ENCODE measurements at regions of chr17 and their contacts with region 1.

Region 1: DNA sequence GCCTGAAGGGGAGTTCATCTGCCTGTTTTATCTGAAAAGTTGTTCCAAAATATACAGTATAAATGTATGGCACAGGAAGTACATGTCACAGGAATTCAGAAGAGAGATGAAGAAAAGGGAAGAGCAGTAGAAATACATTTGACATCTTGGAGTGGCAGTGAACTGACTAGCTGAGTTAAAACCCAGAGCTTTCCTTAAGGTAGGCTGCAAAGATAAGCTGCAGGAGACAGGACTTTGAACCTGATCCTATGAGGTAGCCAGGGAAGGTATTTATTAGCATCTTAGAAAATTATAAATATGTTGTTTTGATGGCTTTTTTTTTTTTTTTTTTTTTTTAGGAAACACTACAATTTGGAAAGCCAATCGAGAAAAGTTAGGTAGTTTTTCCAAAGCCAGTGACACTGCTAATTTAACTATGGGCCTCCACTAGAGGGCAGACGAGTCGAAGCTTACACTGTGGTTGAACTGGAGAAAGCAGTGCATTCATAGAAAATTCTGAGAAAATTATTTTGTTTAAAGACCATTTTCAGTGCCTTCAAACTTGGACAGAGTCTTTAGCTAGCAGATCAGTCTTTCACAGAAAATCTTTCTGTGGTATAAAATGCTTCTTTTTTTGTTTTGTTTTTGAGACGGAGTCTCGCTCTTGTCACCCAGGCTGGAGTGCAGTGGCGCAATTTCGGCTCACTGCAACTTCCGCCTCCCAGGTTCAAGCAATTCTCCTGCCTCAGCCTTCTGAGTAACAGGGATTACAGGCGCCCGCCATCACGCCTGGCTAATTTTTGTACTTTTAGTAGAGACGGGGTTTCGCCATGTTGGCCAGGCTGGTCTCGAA is 122.3 kb downstream of the SSH2 start:
- DNase-seq: peak; percentile 31
- ATAC-seq: peak; percentile 83
- H3K4me3 ChIP-seq: no peak overlapping the region
- H3K27ac ChIP-seq: no peak overlapping the region
- H3K4me1 ChIP-seq: peaks cover 19% of the 10 kb centered on the region
- H3K27me3 ChIP-seq: no peaks in the 10 kb centered on the region
- CTCF ChIP-seq: peak; percentile 65 to 85 (median 69)
- EP300 ChIP-seq: no peak
- POLR2A ChIP-seq: no peak
- RAD21 ChIP-seq: peak; percentile 90

Region 2: DNA sequence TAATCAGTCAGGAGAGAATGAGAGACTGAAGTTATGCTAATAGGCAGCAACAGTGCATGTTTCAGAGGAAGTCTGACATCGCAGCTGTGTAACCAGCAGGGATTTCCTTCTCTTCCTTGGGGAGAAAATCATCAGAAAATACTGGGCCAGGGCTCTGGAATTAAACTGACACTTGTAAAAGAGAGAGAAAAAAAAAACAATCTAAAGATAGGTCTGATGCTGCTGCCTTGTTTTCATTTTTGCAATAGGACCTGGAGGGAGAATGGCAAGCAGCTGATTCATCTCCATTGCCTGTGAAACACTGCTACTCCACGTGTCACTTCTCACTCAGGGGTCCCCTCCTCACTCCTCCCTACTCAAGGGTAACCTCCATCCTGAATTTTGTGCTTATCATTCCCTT is 167.3 kb before region 1 on chr17:
- CTCF ChIA-PET with region 1: interaction called, 21 read pairs
- POLR2A ChIA-PET with region 1: interaction called, 7 read pairs
- RAD21 ChIA-PET with region 1: interaction called, 12 read pairs
- SMC1A ChIA-PET with region 1: interaction called, 9 read pairs
- in situ Hi-C with region 1: no loop called
- intact Hi-C with region 1: no loop called
- DNase-seq: no peak
- ATAC-seq: no peak
- H3K4me3 ChIP-seq: no peak overlapping the region
- H3K27ac ChIP-seq: no peak overlapping the region
- H3K4me1 ChIP-seq: peaks cover 3% of the 10 kb centered on the region
- H3K27me3 ChIP-seq: no peaks in the 10 kb centered on the region
- CTCF ChIP-seq: no peak
- EP300 ChIP-seq: no peak
- POLR2A ChIP-seq: no peak
- RAD21 ChIP-seq: no peak

Region 3: DNA sequence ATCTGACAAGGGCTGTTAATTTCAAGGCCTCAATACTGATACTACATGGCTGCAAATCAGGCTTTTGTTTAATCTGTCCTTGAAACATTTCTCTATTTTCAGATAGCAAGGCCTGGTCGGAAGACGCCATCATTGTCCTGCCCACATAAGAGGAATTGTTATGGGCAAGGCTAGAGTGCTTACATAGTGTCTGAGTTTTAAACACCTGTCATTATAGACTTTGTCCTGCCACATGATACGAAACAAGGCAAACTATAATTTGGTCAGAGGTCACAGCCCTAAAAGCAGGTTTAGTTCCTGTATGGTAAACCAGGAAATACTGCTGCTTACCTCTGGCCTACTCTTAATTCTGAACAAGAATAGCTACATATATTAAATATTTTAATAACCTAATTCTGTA is 17.9 kb after region 1 on chr17:
- CTCF ChIA-PET with region 1: interaction called, 32 read pairs
- POLR2A ChIA-PET with region 1: interaction called, 3 read pairs
- RAD21 ChIA-PET with region 1: interaction called, 3 read pairs
- SMC1A ChIA-PET with region 1: interaction called, 11 read pairs
- in situ Hi-C with region 1: no loop called
- intact Hi-C with region 1: no loop called
- DNase-seq: no peak
- ATAC-seq: no peak
- H3K4me3 ChIP-seq: no peak overlapping the region
- H3K27ac ChIP-seq: no peak overlapping the region
- H3K4me1 ChIP-seq: no peaks in the 10 kb centered on the region
- H3K27me3 ChIP-seq: no peaks in the 10 kb centered on the region
- CTCF ChIP-seq: no peak
- EP300 ChIP-seq: no peak
- POLR2A ChIP-seq: no peak
- RAD21 ChIP-seq: no peak

Region 4: GRCh38 chr17:29867643-29868181 is 60.0 kb after region 1 on chr17:
- CTCF ChIA-PET with region 1: interaction called, 22 read pairs
- POLR2A ChIA-PET with region 1: interaction called, 7 read pairs
- RAD21 ChIA-PET with region 1: interaction called, 27 read pairs
- SMC1A ChIA-PET with region 1: interaction called, 12 read pairs
- in situ Hi-C with region 1: no loop called
- intact Hi-C with region 1: no loop called
- DNase-seq: no peak
- ATAC-seq: peak; percentile 58
- H3K4me3 ChIP-seq: no peak overlapping the region
- H3K27ac ChIP-seq: no peak overlapping the region
- H3K4me1 ChIP-seq: peaks cover 7% of the 10 kb centered on the region
- H3K27me3 ChIP-seq: no peaks in the 10 kb centered on the region
- CTCF ChIP-seq: peak in 1 of 3 experiments; percentile 32; a peak in 3 of 6 replicates
- EP300 ChIP-seq: no peak
- POLR2A ChIP-seq: no peak
- RAD21 ChIP-seq: peak; percentile 39; the same call in 1 of the 2 replicates

Region 5: GRCh38 chr17:29924786-29925185 is 117.0 kb after region 1 on chr17:
- CTCF ChIA-PET with region 1: interaction called, 454 read pairs
- POLR2A ChIA-PET with region 1: interaction called, 87 read pairs
- RAD21 ChIA-PET with region 1: interaction called, 300 read pairs
- SMC1A ChIA-PET with region 1: interaction called, 271 read pairs
- in situ Hi-C with region 1: no loop called
- intact Hi-C with region 1: no loop called
- DNase-seq: no peak
- ATAC-seq: no peak
- H3K4me3 ChIP-seq: no peak overlapping the region
- H3K27ac ChIP-seq: no peak overlapping the region
- H3K4me1 ChIP-seq: peaks cover 11% of the 10 kb centered on the region
- H3K27me3 ChIP-seq: no peaks in the 10 kb centered on the region
- CTCF ChIP-seq: no peak
- EP300 ChIP-seq: no peak
- POLR2A ChIP-seq: no peak
- RAD21 ChIP-seq: no peak

Region 6: GRCh38 chr17:30093463-30094147 is 285.9 kb after region 1 on chr17:
- CTCF ChIA-PET with region 1: interaction called, 47 read pairs
- POLR2A ChIA-PET with region 1: no interaction called
- RAD21 ChIA-PET with region 1: interaction called, 25 read pairs
- SMC1A ChIA-PET with region 1: interaction called, 9 read pairs
- in situ Hi-C with region 1: loop called (anchors 25 kb)
- intact Hi-C with region 1: loop called (anchors 1 kb)
- DNase-seq: peak; percentile 32
- ATAC-seq: peak; percentile 88
- H3K4me3 ChIP-seq: no peak overlapping the region
- H3K27ac ChIP-seq: no peak overlapping the region
- H3K4me1 ChIP-seq: peaks cover 3% of the 10 kb centered on the region; the same call in 1 of the 2 replicates
- H3K27me3 ChIP-seq: no peaks in the 10 kb centered on the region; a peak in 1 of 4 replicates
- CTCF ChIP-seq: peak; percentile 63 to 82 (median 70); a peak in 5 of 6 replicates
- EP300 ChIP-seq: no peak
- POLR2A ChIP-seq: no peak
- RAD21 ChIP-seq: peak; percentile 88

Measured in GM12878 (cell line).